ENCODE measurements at regions of chr17 and their contacts with region 1.

Region 1: DNA sequence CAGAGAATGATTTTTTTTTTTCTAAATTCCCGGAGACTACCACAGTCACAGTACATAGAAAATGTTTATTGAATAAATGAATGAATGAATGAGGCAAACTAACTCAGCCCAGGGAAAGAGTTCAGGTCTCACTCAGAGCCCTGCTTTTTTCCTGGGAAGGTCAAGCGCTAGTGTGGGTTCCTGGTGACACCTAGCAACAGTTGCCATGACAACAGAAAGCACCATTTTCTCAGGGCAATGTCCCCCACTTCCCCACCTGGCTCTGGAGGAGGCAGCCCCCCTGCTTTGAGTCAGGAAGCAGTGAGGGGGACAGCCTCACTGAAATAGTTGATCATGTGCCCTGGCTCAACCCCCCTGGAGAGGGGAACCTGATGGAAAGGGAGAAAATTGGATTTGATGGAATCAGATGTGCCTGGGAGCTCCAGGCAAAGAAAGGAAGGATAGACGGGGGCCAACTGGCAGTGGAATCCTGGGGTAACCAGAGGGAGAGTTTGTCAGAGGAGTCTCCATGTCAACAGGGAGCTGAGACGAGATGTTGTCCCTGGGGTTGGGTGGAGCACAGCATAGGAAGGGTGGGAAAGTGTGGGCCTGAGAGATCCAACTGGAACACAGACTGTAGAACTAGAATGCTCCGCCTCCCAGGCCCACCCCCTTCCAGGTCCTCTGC is 242.2 kb upstream of the CCL2 start:
- DNase-seq: no peak
- ATAC-seq: no peak
- H3K4me3 ChIP-seq: no peak overlapping the region
- H3K27ac ChIP-seq: no peak overlapping the region
- H3K4me1 ChIP-seq: no peaks in the 10 kb centered on the region
- H3K27me3 ChIP-seq: no peaks in the 10 kb centered on the region

Region 2: GRCh38 chr17:33949100-33949499 is 63.7 kb before region 1 on chr17:
- intact Hi-C with region 1: loop called in 1 of 4 experiments (anchors 10 kb)
- DNase-seq: no peak
- ATAC-seq: no peak
- H3K4me3 ChIP-seq: no peak overlapping the region
- H3K27ac ChIP-seq: no peak overlapping the region
- H3K4me1 ChIP-seq: no peaks in the 10 kb centered on the region
- H3K27me3 ChIP-seq: no peaks in the 10 kb centered on the region

Region 3: GRCh38 chr17:34110315-34110714 is 97.5 kb after region 1 on chr17:
- intact Hi-C with region 1: no loop called
- DNase-seq: no peak
- ATAC-seq: no peak
- H3K4me3 ChIP-seq: no peak overlapping the region
- H3K27ac ChIP-seq: no peak overlapping the region
- H3K4me1 ChIP-seq: no peaks in the 10 kb centered on the region
- H3K27me3 ChIP-seq: no peaks in the 10 kb centered on the region